AG04449 (cell line): ENCODE measurements at regions of chr2 and their contacts with region 1.

Region 1: DNA sequence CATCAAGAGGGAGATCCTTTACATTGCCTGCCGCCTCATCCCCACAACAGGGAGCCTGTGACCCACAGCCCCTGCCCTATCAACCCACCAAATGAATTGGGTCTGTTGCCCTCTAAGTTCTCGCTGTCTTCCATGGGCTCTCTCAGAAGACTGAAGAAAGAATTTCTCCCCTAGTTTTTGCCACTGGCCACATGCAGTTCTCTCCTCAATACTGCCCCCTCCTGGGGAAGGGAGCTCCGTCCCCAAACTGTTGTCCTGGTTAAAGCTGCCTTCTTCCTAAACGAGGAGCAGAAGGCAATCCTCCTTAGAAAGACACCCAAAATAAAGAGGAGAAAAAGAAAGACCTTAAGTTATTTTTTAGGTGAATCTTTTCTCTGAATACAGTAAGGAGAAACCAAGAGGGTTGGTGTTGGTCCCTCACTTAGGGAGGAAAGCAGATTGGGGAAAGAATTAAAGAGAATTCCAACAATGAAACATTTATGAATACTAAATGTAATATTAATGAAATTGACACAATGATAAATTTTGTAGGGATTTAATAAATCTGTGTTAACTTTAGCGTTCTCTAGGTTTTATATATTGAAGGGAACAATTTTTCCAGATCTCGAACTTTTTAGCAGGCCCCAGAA is 31.1 kb upstream of the SATB2 start:
- DNase-seq: no peak
- H3K4me3 ChIP-seq: no peak overlapping the region
- CTCF ChIP-seq: peak; percentile 89

Region 2: DNA sequence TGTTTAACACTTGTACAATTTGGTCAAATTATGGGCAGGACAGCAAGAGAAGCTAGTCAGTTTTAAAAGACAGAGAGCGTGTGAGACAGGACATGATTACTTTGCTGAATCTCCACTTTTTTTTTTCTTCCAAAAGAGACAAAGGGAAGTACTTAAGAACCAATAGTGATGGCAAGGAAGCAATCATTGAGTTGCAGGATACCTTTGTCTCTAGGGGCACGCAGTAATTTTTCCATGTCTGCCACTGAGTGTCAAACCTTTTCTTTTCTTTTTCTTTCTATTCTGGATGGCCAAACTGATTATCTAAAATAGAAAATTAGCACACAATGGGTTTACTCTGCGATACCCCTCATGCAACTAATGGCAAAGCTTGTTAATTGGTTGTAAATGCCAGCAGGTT is 1151.5 kb before region 1 on chr2:
- CTCF ChIA-PET with region 1: interaction called, 19 read pairs
- POLR2A ChIA-PET with region 1: no interaction called
- DNase-seq: no peak
- H3K4me3 ChIP-seq: no peak overlapping the region
- CTCF ChIP-seq: no peak

Region 3: GRCh38 chr2:198657512-198658121 is 831.3 kb before region 1 on chr2:
- CTCF ChIA-PET with region 1: interaction called, 37 read pairs
- POLR2A ChIA-PET with region 1: no interaction called
- DNase-seq: no peak
- H3K4me3 ChIP-seq: no peak overlapping the region
- CTCF ChIP-seq: peak; percentile 47

Region 4: DNA sequence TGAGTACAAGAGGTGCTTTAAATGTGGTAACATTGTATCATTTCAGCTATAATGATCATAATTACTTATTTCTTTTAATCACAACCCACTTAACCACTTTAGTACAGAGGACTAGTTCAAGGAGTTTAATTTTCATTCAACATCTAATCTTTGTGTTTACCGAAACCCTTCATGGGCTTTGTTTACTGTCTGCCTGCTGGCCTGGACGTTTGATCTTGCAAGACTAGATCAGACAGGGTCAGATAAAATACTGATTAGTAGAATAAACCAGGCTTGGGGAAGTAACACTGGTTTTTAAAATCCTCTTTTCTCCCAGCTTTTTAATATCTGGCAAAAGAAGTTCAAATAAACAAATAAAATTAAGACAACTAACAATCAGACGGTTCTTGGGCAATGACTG is 124.7 kb before region 1 on chr2:
- CTCF ChIA-PET with region 1: no interaction called
- POLR2A ChIA-PET with region 1: no interaction called
- DNase-seq: no peak
- H3K4me3 ChIP-seq: no peak overlapping the region
- CTCF ChIP-seq: no peak

Region 5: DNA sequence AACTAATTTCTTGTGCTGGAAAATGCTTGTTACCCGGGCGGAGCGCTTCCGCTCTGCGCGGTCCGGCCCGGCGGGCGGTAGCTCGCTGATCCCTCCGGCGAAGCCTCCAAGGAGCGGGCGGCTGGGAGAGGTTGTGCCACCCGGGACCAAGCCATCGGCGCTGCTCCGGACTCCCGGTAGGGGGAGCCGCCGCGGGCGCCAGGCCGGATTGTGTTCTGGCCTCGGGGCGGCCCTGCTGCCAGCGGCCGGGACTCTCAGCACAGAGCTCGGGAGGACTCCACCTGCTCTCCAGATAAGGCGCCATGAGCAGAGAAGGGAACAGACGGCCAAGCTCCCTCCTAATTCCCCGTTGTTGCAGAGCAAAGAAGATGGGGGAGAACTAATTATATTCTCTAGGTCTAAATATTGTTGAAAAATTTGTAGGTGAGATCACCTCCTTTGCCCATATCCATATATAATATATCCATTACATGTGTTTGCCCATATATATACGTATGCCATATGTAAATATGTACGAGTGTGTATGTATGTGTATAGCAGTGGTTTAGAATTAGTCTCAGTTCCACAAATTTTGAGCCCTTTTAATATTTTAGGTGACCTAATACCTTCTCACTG is 17.3 kb before region 1 on chr2:
- CTCF ChIA-PET with region 1: interaction called, 133 read pairs
- POLR2A ChIA-PET with region 1: no interaction called
- DNase-seq: no peak
- H3K4me3 ChIP-seq: peak overlapping the region; percentile 43
- CTCF ChIP-seq: peak; percentile 94